T-cell (primary cell): ENCODE measurements at regions of chr7 and their contacts with region 1.

Region 1: DNA sequence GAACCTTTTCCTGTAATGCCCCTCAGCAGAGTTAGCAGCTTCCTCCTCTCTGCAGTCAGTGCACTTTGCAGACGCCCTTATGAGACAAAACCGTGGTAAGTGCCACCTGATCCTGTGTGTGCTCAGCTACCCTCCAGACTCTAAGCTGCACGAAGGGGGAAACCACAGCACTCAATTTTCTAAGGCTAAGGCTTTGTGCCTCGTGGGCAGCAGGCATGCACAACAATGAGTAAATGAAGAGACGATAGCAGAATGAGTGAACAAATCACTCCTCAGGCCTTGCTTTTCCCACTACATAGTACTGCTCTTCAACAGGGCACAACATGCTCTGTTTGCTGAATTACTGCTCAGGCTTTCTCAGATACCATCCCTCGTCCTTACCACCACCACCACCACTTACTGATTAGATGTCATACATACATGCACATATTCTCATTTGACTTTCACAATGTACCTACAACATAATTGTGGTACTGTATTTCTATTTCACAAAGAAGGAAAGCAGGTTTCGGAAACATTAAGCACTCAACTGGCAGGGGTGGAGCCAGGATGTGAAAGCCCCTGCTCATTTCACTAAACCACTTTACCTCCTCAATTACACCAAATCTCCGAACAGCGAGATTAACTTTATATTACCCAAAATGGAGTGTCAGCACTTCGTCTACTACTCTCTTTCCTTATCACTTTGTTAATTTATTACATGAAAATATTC is 85.4 kb downstream of the ICA1 start:
- DNase-seq: peak; percentile 42 to 85 (median 60)
- ATAC-seq: peak; percentile 94 to 99 (median 98)
- H3K4me3 ChIP-seq: peak overlapping the region; percentile 23 to 50
- H3K4me3 Mint-ChIP-seq: peak overlapping the region; percentile 55 to 71 (median 70)
- H3K27ac ChIP-seq: peak overlapping the region; percentile 75
- H3K27ac Mint-ChIP-seq: peak overlapping the region; percentile 93 to 96
- H3K4me1 ChIP-seq: peaks cover 41 to 43% of the 10 kb centered on the region in 2 experiments
- H3K4me1 Mint-ChIP-seq: peaks cover 57 to 66% (median 60%) of the 10 kb centered on the region in 3 donors
- H3K27me3 ChIP-seq: no peaks in the 10 kb centered on the region
- H3K27me3 Mint-ChIP-seq: no peaks in the 10 kb centered on the region

Region 2: GRCh38 chr7:8134089-8134733 is 42.3 kb before region 1 on chr7:
- CTCF ChIA-PET with region 1: interaction called in 1 of 2 experiments, 3 read pairs
- POLR2A ChIA-PET with region 1: interaction called in 1 of 2 experiments, 10 read pairs
- DNase-seq: peak in 2 of 35 experiments; percentile 31 to 61
- ATAC-seq: peak; percentile 33 to 42 (median 37)
- H3K4me3 ChIP-seq: peak overlapping the region in 1 of 2 donors; percentile 2
- H3K4me3 Mint-ChIP-seq: peak overlapping the region; percentile 3 to 52 (median 10)
- H3K27ac ChIP-seq: peak overlapping the region; percentile 92
- H3K27ac Mint-ChIP-seq: peak overlapping the region; percentile 95 to 97
- H3K4me1 ChIP-seq: peaks cover 45 to 54% of the 10 kb centered on the region in 2 experiments
- H3K4me1 Mint-ChIP-seq: peaks cover 60 to 71% (median 60%) of the 10 kb centered on the region in 3 donors
- H3K27me3 ChIP-seq: no peaks in the 10 kb centered on the region
- H3K27me3 Mint-ChIP-seq: no peaks in the 10 kb centered on the region

Region 3: GRCh38 chr7:8197994-8198698 is 21.6 kb after region 1 on chr7:
- CTCF ChIA-PET with region 1: no interaction called
- POLR2A ChIA-PET with region 1: no interaction called
- DNase-seq: peak in 26 of 35 experiments; percentile 4 to 70 (median 19)
- ATAC-seq: peak; percentile 45 to 83 (median 68)
- H3K4me3 ChIP-seq: no peak overlapping the region
- H3K4me3 Mint-ChIP-seq: no peak overlapping the region
- H3K27ac ChIP-seq: no peak overlapping the region
- H3K27ac Mint-ChIP-seq: peak overlapping the region; percentile 2 to 37
- H3K4me1 ChIP-seq: peaks cover 0 to 11% of the 10 kb centered on the region in 2 experiments
- H3K4me1 Mint-ChIP-seq: peaks cover 10 to 15% (median 12%) of the 10 kb centered on the region in 3 donors
- H3K27me3 ChIP-seq: no peaks in the 10 kb centered on the region
- H3K27me3 Mint-ChIP-seq: no peaks in the 10 kb centered on the region